Activated T-helper 2 cell treated with anti-CD3 and anti-CD28 coated beads, Interferon-gamma antibody, Interleukin-2, Interleukin-4, amounts not matched to agents 10 μg/mL and 5 μg/mL and 100 μg/mL, durations not matched to agents 14 hours and 24 hours and 36 hours (primary cell): ENCODE measurements at regions of chr2 and their contacts with region 1.

Region 1: GRCh38 chr2:204024503-204024902 is 87.9 kb downstream of the ICOS start:
- DNase-seq: no peak
- H3K4me3 Mint-ChIP-seq: no peak overlapping the region
- H3K27ac Mint-ChIP-seq: no peak overlapping the region
- H3K4me1 Mint-ChIP-seq: peaks cover 49% of the 10 kb centered on the region
- H3K27me3 Mint-ChIP-seq: peaks cover 1% of the 10 kb centered on the region

Region 2: GRCh38 chr2:203887677-203888076 is 136.8 kb before region 1 on chr2:
- intact Hi-C with region 1: loop called (anchors 2 kb)
- DNase-seq: no peak
- H3K4me3 Mint-ChIP-seq: no peak overlapping the region
- H3K27ac Mint-ChIP-seq: peak overlapping the region; percentile 54
- H3K4me1 Mint-ChIP-seq: peaks cover 67% of the 10 kb centered on the region
- H3K27me3 Mint-ChIP-seq: no peaks in the 10 kb centered on the region

Region 3: DNA sequence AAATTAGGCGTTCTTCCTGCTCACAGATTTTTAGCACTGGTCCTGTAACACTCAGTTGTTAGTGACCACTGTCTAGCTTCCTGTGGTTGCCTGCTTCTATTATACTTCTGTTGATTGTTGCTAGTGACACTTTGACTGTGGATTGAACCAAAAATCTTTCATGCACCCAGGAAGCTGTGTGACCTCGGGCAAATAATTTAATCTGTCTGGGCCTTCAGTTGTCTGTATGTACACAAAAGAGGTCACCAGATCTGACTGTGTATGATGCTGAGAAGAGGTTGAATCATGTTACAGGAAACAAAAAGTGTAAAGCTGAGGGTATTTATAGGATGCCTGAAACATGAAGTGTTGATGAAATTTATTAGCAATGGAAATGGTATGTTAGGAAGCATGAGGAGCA is 75.3 kb before region 1 on chr2:
- intact Hi-C with region 1: loop called (anchors 1 kb)
- DNase-seq: no peak
- H3K4me3 Mint-ChIP-seq: peak overlapping the region; percentile 23
- H3K27ac Mint-ChIP-seq: peak overlapping the region; percentile 47
- H3K4me1 Mint-ChIP-seq: peaks cover 81% of the 10 kb centered on the region
- H3K27me3 Mint-ChIP-seq: no peaks in the 10 kb centered on the region

Region 4: GRCh38 chr2:203989521-203989920 is 35.0 kb before region 1 on chr2:
- intact Hi-C with region 1: loop called (anchors 5 kb)
- DNase-seq: no peak
- H3K4me3 Mint-ChIP-seq: no peak overlapping the region
- H3K27ac Mint-ChIP-seq: peak overlapping the region; percentile 16
- H3K4me1 Mint-ChIP-seq: peaks cover 33% of the 10 kb centered on the region
- H3K27me3 Mint-ChIP-seq: no peaks in the 10 kb centered on the region

Region 5: GRCh38 chr2:204049635-204050034 is 25.1 kb after region 1 on chr2:
- intact Hi-C with region 1: loop called (anchors 1 kb)
- DNase-seq: no peak
- H3K4me3 Mint-ChIP-seq: no peak overlapping the region
- H3K27ac Mint-ChIP-seq: no peak overlapping the region
- H3K4me1 Mint-ChIP-seq: peaks cover 24% of the 10 kb centered on the region
- H3K27me3 Mint-ChIP-seq: peaks cover 33% of the 10 kb centered on the region

Region 6: GRCh38 chr2:204072443-204073324 is 48.2 kb after region 1 on chr2:
- intact Hi-C with region 1: no loop called
- DNase-seq: peak; percentile 48
- H3K4me3 Mint-ChIP-seq: no peak overlapping the region
- H3K27ac Mint-ChIP-seq: no peak overlapping the region
- H3K4me1 Mint-ChIP-seq: peaks cover 11% of the 10 kb centered on the region
- H3K27me3 Mint-ChIP-seq: peaks cover 19% of the 10 kb centered on the region

Region 7: DNA sequence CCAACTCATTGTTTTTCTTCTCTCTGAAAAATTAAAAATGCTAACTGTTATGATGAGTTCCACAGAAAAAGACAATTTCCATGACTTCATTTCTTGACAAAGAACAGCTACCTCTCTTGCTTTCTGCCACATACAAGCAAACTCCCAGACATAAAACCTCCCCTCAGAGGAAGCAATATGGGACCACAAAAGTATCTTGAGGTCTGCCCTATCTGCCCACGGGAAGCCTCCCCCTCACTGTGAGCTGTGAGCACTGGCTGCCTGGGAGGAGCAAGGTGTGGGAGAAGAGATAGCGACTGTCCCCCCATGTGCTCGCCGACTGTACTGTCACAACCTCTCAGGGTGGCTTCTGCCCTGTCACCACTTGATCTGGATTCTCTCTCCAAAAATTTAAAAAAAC is 1588.1 kb after region 1 on chr2:
- intact Hi-C with region 1: loop called (anchors 2 kb)
- DNase-seq: peak; percentile 41
- H3K4me3 Mint-ChIP-seq: peak overlapping the region; percentile 38
- H3K27ac Mint-ChIP-seq: peak overlapping the region; percentile 91
- H3K4me1 Mint-ChIP-seq: peaks cover 60% of the 10 kb centered on the region
- H3K27me3 Mint-ChIP-seq: no peaks in the 10 kb centered on the region